ENCODE measurements at regions of chr1 and their contacts with region 1.

Region 1: GRCh38 chr1:9371391-9371935 is 78.8 kb downstream of the SPSB1 start:
- DNase-seq: peak; percentile 46 to 51
- ATAC-seq: peak; percentile 29 to 36
- H3K4me3 ChIP-seq: no peak overlapping the region
- H3K27ac ChIP-seq: peak overlapping the region; percentile 48 to 69 (median 64)
- H3K4me1 ChIP-seq: peaks cover 17 to 22% of the 10 kb centered on the region in 2 donors
- H3K27me3 ChIP-seq: no peaks in the 10 kb centered on the region
- CTCF ChIP-seq: no peak
- POLR2A ChIP-seq: no peak

Region 2: GRCh38 chr1:9041116-9041779 is 330.2 kb before region 1 on chr1:
- in situ Hi-C with region 1: no loop called
- intact Hi-C with region 1: no loop called
- DNase-seq: no peak
- ATAC-seq: no peak
- H3K4me3 ChIP-seq: no peak overlapping the region
- H3K27ac ChIP-seq: no peak overlapping the region
- H3K4me1 ChIP-seq: no peaks in the 10 kb centered on the region
- H3K27me3 ChIP-seq: no peaks in the 10 kb centered on the region
- CTCF ChIP-seq: no peak
- POLR2A ChIP-seq: no peak

Region 3: GRCh38 chr1:9302745-9303524 is 68.5 kb before region 1 on chr1:
- in situ Hi-C with region 1: loop called in 1 of 4 experiments (anchors 10 kb)
- intact Hi-C with region 1: no loop called
- DNase-seq: no peak
- ATAC-seq: peak; percentile 45 to 72
- H3K4me3 ChIP-seq: no peak overlapping the region
- H3K27ac ChIP-seq: peak overlapping the region; percentile 56 to 75 (median 61)
- H3K4me1 ChIP-seq: peaks cover 44% of the 10 kb centered on the region in 2 donors
- H3K27me3 ChIP-seq: no peaks in the 10 kb centered on the region
- CTCF ChIP-seq: no peak
- POLR2A ChIP-seq: no peak

Region 4: DNA sequence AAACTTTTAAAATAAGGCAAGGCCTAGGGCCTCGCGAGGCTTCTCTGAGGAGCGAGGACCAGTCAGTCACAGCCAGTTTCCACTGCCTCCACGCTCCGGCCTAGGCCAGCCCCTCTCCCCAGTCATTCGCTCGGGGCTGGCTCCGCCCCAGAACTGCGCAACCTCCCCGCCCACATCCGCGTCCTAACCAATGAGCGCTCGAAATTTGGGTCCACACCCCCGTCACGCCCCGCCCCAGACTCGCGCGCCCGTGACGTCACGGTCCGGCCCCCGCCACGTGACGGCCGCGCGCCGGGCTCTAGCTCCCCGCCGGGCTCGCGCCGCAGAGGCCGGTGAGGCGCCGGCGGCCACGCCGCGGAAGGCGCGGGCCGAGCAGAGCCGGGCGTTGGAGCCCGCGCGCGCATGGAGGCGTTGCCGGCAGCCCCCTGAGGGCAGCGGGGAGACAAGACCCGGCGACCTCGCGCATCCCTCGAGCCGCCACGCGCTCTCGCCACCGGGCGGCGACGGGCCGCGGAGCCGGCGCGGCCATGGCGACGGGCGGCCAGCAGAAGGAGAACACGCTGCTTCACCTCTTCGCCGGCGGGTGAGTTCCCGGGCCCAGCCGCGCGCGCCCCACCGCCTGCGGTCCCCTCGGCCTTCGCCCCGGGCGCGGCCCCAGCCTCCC is 167.8 kb after region 1 on chr1 and contains the start of gene SLC25A33:
- in situ Hi-C with region 1: no loop called
- intact Hi-C with region 1: no loop called
- DNase-seq: peak; percentile 96 to 97
- ATAC-seq: peak; percentile 92 to 93
- H3K4me3 ChIP-seq: peak within 1 kb of the TSS; percentile 75 to 89 (median 76)
- H3K27ac ChIP-seq: peak within 1 kb of the TSS; percentile 91 to 98 (median 95)
- H3K4me1 ChIP-seq: peaks cover 26 to 28% of the 10 kb centered on the region in 2 donors
- H3K27me3 ChIP-seq: no peaks in the 10 kb centered on the region
- CTCF ChIP-seq: peak in 3 of 5 experiments; percentile 20 to 60 (median 31)
- POLR2A ChIP-seq: peak; percentile 100
- total RNA-seq, gene SLC25A33: 40.3 to 88.6 (median 49.1) TPM